ENCODE measurements at regions of chr5 and their contacts with region 1.

Region 1: GRCh38 chr5:149852641-149853330 is 91.8 kb downstream of the PDE6A start:
- DNase-seq: peak; percentile 71
- CTCF ChIP-seq: peak; percentile 87

Region 2: DNA sequence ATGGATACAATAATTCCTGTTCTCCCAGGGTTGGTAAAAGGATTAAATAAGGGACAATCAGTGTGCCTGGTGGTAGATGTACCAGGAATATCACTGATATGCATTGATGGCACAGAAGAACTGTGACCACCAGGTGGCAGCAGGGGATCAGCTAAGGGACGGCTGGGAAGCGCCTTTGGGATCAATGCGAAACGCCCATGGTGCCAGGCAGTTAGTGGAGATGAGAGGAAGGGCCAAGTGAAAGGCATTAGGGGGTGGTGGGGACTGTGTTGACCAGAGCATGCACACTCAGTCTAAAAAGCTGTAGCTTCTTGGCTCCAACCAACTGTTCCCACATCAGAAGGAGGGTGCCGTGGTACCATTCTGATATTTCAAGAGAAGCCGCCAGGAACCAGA is 215.9 kb before region 1 on chr5:
- CTCF ChIA-PET with region 1: interaction called, 225 read pairs
- POLR2A ChIA-PET with region 1: no interaction called
- DNase-seq: peak; percentile 73
- CTCF ChIP-seq: peak; percentile 89

Region 3: DNA sequence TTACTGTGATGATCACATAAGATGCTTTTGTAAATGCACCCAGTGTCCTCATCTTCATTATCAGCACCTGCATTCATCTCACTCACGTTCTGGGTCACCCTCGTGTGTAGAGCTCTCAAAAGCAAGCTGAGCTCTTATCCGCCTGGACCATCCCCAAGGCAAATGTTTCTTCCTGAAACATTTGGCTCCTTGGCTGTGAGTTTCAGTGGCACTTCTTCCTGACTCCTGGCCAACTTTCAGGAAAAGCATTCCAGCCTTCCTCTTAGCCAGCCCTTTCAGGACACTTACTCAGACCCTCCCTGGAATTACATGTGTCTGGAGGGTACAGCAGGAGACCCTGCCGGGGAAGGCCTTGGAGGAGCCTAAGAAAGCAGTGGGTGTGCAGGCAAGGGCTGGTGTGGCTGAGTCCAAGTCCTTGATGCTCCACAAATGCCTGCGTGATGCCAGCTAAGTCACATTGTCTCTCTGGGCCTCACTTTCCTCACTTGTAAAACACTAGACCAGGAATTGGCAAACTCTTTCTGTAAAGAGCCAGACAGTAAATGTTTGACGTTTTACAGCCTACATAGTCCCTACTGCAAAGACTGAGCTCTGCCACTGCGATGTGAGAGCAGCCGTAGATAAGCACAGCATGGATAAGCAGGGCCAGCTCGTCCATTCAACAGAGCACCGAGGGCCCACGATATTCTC is 19.7 kb after region 1 on chr5:
- CTCF ChIA-PET with region 1: interaction called, 11 read pairs
- POLR2A ChIA-PET with region 1: no interaction called
- DNase-seq: no peak
- CTCF ChIP-seq: no peak